PC-9 (cell line): ENCODE measurements at regions of chr12 and their contacts with region 1.

Region 1: DNA sequence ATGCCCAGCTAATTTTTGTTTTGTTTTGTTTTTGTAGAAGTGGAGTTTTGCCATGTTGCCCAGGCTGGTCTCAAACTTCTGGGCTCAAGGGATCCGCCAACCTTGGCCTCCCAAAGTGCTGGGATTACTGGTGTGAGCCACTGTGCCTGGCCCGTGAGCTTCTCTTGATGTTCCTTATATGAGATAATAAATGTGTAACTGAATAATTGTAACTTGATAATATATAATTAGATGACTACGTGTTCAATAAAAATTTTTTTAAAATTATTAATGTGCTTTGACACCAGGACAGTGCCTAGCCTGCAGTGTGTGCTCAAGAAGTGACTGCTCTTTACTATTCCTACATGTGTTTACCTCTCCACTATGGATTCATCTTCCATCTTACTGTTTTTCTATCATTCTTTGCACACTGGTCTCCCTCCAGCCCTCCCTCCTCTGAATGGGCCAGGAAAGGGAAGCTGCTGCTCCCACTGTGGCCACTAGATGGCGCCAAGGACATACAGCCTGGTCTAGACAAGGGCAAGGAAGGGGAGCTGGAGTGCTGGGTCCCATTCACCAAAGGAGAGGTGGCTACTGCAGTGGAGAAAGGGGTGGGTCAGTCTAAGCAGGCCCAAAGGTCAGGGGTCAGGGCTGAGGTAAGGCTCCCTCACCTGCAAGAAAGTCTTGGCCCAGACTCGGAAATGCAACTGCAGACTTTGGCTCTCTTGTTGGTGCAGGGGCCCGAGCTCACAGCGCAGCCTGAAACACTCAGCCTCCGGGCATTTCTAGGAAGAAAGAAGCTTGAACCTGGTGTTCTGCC is 14.7 kb upstream of the ZNF385A start:
- DNase-seq: peak; percentile 60 to 82
- H3K4me3 ChIP-seq: no peak overlapping the region
- H3K27ac ChIP-seq: no peak overlapping the region
- H3K4me1 ChIP-seq: no peaks in the 10 kb centered on the region
- H3K27me3 ChIP-seq: no peaks in the 10 kb centered on the region
- CTCF ChIP-seq: peak; percentile 99

Region 2: DNA sequence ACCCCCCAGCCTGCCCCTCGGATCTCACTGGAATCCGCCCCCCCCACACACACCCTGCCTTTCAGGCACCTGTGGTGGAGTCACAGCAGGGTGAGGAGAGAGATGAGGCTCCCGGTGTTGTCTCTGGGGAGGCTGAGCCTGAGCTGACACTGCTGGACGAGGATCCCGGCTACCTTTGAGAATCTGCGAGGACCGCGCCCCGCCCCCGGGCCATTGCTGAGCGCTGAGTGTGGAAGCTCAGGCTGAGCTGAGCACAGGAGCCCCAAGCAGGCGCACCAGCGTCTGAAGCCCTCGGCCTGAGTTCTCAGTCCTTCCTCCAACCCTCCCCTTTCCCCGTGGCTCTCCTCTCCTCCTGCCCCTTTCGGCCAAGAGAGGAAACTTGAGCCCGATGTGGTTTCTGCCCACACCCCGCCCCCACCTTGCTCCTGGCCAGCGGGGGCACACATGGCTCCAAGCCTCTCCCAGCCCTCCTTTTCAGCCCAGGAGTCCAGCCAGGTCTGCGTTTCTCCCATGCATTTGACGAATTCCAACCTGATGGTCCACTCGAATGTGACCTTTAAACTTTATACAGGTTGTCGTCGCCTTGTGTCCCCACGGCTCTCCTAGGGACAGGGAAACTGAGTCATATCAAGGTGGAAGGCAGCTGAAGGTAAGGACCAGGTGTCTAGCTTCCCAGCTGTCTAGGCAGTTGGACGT is 98.3 kb before region 1 on chr12 and contains the start of gene NFE2:
- CTCF ChIA-PET with region 1: interaction called, 10 read pairs
- POLR2A ChIA-PET with region 1: no interaction called
- intact Hi-C with region 1: no loop called
- DNase-seq: peak; percentile 81 to 82
- H3K4me3 ChIP-seq: peak within 1 kb of the TSS; percentile 46; the same call in 1 of the 2 replicates
- H3K27ac ChIP-seq: no peak within 1 kb of the TSS
- H3K4me1 ChIP-seq: peaks cover 46% of the 10 kb centered on the region
- H3K27me3 ChIP-seq: no peaks in the 10 kb centered on the region
- CTCF ChIP-seq: no peak; the same call in 1 of the 2 replicates
- total RNA-seq, gene NFE2: 1.5 and 1.7 TPM in 2 replicates

Region 3: GRCh38 chr12:54419088-54419892 is 20.1 kb after region 1 on chr12 and contains the start of gene ITGA5:
- CTCF ChIA-PET with region 1: interaction called, 13 read pairs
- POLR2A ChIA-PET with region 1: no interaction called
- intact Hi-C with region 1: no loop called
- DNase-seq: peak; percentile 44 to 63
- H3K4me3 ChIP-seq: peak within 1 kb of the TSS; percentile 92
- H3K27ac ChIP-seq: no peak within 1 kb of the TSS
- H3K4me1 ChIP-seq: peaks cover 57% of the 10 kb centered on the region
- H3K27me3 ChIP-seq: no peaks in the 10 kb centered on the region
- CTCF ChIP-seq: no peak
- total RNA-seq, gene ITGA5: 26.7 and 28.4 TPM in 2 replicates

Region 4: GRCh38 chr12:54439521-54440255 is 40.5 kb after region 1 on chr12:
- CTCF ChIA-PET with region 1: interaction called, 62 read pairs
- POLR2A ChIA-PET with region 1: no interaction called
- intact Hi-C with region 1: loop called (anchors 1 kb)
- DNase-seq: peak in 1 of 2 experiments; percentile 55
- H3K4me3 ChIP-seq: no peak overlapping the region
- H3K27ac ChIP-seq: no peak overlapping the region
- H3K4me1 ChIP-seq: 0 out of 2 replicates have a peak, but pooled peaks cover 8% of the 10 kb centered on the region
- H3K27me3 ChIP-seq: no peaks in the 10 kb centered on the region
- CTCF ChIP-seq: peak; percentile 85

Region 5: DNA sequence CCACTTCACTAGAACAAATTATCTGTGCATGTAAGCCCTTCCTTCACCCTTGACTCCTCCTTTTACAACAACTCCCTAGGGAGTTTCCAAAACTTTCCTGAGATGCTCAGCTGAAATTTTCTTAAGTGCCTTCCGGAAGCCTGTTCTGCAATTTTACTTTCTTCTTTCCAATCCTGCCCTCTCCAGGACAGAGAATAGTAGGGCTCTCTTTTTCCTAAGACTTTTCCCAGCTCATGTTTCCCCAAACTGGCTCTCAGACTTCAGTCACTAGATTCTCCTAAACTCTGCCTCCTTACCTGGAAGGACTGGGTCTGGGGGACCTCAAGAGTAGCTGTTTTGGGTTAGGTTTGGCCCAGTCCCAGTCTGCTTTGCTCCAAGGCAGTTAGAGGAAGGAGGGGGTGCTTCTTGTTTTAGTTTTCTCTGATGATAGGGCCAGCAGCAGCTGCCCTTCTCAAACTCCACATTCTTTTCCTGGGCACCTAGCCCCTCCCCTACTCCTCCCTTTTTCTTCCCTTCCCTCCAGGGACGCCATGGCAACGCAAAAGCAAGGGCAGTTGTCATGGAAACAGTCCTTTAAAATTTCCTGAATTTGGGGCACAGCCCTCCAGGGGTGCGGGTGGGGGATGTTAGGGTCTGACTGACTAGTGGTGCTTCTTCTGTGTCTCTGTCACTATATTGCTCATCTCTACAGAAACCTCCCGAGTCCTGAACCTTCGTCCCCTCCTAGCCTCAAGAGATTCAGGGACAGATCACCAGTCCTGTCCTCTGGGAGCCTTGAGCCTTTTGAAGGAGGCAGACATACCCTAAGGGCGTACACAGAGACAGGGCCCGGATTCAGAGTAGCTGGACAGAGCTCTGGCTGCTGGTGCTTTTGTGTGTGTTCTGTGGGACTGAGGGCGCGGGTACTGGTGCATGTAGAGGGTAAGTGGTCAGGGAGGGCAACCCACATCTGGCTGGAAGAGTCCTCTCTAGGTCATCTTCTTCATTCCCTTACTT is 172.3 kb after region 1 on chr12:
- CTCF ChIA-PET with region 1: no interaction called
- POLR2A ChIA-PET with region 1: no interaction called
- intact Hi-C with region 1: no loop called
- DNase-seq: no peak
- H3K4me3 ChIP-seq: no peak overlapping the region
- H3K27ac ChIP-seq: no peak overlapping the region
- H3K4me1 ChIP-seq: no peaks in the 10 kb centered on the region
- H3K27me3 ChIP-seq: peaks cover 86% of the 10 kb centered on the region
- CTCF ChIP-seq: no peak

Region 6: DNA sequence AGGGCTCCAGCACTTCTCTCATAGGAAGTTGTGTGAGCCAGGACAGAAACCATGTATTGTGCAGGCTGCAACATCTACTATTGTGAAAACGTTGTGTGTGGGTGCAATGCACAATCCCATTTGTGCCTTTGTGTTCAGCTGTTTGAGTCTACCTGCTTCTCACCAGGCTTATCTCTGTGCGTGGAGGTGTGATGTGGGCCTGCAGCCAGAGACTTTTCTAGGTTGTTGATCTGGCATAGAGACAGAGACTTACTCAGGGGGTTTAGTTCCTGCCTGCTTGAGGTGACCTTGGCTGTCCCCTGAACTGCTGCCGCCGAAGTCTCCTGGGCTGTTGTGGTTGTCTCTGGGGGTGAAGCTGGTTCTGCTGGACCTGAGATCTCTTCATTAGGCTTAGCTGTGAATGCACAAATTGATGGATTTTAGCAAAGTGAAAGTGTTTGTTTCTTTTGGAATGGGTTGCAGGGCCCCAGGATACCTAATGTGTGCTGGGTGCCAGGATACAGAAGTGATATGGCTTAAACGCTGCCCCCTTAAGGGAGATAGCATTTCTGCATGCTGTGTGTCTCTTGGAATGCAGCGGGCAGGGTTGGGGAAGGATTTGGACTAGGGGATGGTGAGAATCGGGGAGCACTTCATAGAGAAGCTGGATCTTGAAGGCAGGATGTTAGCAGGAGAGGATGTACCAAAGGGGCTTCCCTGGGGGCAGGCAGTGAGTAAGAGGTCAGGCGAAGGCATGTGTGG is 233.0 kb after region 1 on chr12:
- CTCF ChIA-PET with region 1: no interaction called
- POLR2A ChIA-PET with region 1: no interaction called
- intact Hi-C with region 1: no loop called
- DNase-seq: no peak
- H3K4me3 ChIP-seq: no peak overlapping the region
- H3K27ac ChIP-seq: no peak overlapping the region
- H3K4me1 ChIP-seq: no peaks in the 10 kb centered on the region
- H3K27me3 ChIP-seq: peaks cover 23% of the 10 kb centered on the region
- CTCF ChIP-seq: no peak

Region 7: DNA sequence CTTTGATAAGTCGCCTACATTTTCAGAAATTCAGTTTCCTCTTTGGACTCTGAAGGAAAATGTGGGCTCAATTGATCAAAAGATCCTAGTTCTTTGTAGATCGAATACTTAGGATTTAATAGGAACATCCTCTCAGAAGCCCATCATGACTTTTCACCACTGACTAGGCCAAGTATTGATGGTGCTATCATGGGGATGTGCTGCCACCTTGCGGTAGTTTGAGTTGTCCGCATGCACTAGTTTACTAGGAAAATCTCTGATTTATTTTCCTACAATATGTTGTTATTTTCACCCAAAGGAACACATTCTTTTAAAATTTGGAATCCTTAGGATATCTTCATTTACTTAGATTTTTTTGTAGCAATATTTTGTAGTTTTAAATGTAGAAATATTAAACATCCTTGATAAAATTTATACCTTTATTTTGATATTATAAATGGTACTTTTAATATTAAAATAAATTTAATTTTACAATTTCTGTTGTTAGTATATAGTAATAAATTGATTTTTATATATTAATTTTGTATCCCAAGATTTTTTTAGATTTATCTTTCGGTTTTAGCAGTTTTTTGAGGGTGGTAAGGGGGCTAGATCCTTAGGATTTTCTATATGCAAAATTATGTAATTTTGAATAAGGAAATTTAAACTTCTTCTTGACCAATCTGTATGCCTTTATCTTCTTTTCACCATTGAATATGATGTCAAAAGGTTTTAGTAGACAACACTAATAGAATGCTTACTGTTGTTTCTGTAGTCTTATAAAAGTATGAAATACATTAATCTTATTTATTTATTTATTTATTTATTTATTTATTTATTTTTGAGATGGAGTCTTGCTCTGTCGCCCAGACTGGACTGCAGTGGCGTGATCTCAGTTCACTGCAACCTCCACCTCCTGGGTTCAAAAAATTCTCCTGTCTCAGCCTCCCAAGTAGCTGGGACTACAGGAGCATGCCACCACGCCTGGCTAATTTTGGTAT is 674.1 kb after region 1 on chr12:
- CTCF ChIA-PET with region 1: no interaction called
- POLR2A ChIA-PET with region 1: no interaction called
- intact Hi-C with region 1: no loop called
- DNase-seq: peak in 1 of 2 experiments; percentile 45
- H3K4me3 ChIP-seq: no peak overlapping the region
- H3K27ac ChIP-seq: no peak overlapping the region
- H3K4me1 ChIP-seq: no peaks in the 10 kb centered on the region
- H3K27me3 ChIP-seq: peaks cover 5% of the 10 kb centered on the region; the same call in 1 of the 2 replicates
- CTCF ChIP-seq: peak; percentile 87